ENCODE measurements at regions of chr12 and their contacts with region 1.

Region 1: GRCh38 chr12:120580787-120581723 is at the start of gene POP5:
- H3K4me3 ChIP-seq: peak within 1 kb of the TSS; percentile 83
- H3K27ac ChIP-seq: peak within 1 kb of the TSS; percentile 60; the same call in 1 of the 2 replicates
- H3K4me1 ChIP-seq: no peaks in the 10 kb centered on the region
- CTCF ChIP-seq: no peak

Region 2: DNA sequence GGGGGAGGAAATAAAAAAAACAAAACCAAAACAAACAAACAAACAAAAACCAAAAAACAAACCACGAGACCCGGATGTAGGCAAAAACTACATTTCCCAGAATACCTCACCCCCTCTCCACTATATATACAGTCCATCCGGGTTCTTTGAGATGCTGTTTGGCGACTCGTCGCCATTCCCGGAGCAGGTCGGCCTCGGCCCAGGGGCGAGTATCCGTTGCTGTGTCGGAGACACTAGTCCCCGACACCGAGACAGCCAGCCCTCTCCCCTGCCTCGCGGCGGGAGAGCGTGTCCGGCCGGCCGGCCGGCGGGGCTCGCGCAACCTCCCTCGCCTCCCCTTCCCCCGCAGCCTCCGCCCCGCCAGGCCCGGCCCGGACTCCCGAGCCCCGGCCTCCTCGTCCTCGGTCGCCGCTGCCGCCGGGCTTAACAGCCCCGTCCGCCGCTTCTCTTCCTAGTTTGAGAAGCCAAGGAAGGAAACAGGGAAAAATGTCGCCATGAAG is 46.8 kb before region 1 on chr12 and contains the start of gene RNF10:
- CTCF ChIA-PET with region 1: interaction called, 4 read pairs
- POLR2A ChIA-PET with region 1: interaction called, 10 read pairs
- H3K4me3 ChIP-seq: peak within 1 kb of the TSS; percentile 86
- H3K27ac ChIP-seq: peak within 1 kb of the TSS; percentile 81
- H3K4me1 ChIP-seq: peaks cover 18% of the 10 kb centered on the region
- CTCF ChIP-seq: no peak

Region 3: DNA sequence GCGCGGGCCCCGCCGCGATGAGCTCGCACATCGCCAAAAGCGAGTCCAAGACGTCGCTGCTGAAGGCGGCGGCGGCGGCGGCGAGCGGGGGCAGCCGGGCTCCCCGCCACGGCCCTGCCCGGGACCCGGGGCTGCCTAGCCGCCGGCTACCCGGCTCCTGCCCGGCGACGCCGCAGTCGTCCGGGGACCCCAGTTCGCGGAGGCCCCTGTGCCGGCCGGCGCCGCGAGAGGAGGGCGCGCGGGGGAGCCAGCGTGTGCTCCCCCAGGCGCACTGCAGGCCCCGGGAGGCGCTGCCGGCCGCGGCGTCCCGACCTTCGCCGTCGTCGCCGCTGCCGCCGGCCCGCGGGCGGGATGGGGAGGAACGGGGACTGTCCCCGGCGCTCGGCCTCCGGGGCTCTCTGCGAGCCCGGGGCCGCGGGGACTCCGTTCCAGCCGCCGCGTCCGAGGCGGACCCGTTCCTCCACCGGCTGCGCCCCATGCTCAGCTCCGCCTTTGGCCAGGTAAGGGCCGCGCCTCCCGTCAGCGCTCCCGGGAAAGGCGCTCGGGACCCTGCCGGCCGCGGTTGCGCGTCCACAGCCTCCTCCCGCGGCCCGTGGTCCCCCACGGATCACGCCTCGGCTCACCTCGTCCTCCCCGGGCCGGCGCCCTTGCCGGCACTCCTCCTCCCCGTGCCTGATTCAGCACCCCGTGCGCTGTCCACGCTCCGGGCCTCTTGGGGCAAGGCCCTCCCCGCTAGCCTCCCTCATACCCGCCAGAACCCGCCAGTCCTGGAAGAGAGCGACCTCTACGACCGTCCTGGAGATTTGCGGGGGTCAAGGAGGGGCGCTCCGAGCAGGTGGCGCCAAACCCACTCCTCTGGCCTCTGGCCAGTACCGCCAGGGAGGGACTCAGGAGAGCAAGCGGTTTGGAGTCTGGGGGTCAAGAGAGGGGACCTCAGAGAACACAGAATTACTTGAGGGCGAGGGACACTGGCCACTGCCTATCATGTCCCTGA is 60.1 kb after region 1 on chr12:
- CTCF ChIA-PET with region 1: interaction called, 77 read pairs
- POLR2A ChIA-PET with region 1: no interaction called
- H3K4me3 ChIP-seq: peak overlapping the region; percentile 41
- H3K27ac ChIP-seq: peak overlapping the region; percentile 56; the same call in 1 of the 2 replicates
- H3K4me1 ChIP-seq: peaks cover 5% of the 10 kb centered on the region; the same call in 1 of the 2 replicates
- CTCF ChIP-seq: peak; percentile 81

Region 4: GRCh38 chr12:120710031-120710804 is 129.2 kb after region 1 on chr12 and contains the start of gene UNC119B:
- CTCF ChIA-PET with region 1: interaction called, 15 read pairs
- POLR2A ChIA-PET with region 1: interaction called, 9 read pairs
- H3K4me3 ChIP-seq: peak within 1 kb of the TSS; percentile 77
- H3K27ac ChIP-seq: peak within 1 kb of the TSS; percentile 91
- H3K4me1 ChIP-seq: peaks cover 3% of the 10 kb centered on the region; the same call in 1 of the 2 replicates
- CTCF ChIP-seq: no peak

Measured in HEK293 (cell line).